Activated B cell treated with CpG ODN at 0.5 μM for 24 hours (primary cell): ENCODE measurements at regions of chr2 and their contacts with region 1.

Region 1: GRCh38 chr2:191150600-191151330 is at the start of gene STAT4:
- DNase-seq: peak; percentile 55
- ATAC-seq: peak; percentile 92
- H3K4me3 Mint-ChIP-seq: peak within 1 kb of the TSS; percentile 89
- H3K27ac Mint-ChIP-seq: peak within 1 kb of the TSS; percentile 79
- H3K4me1 Mint-ChIP-seq: peaks cover 30% of the 10 kb centered on the region
- H3K27me3 Mint-ChIP-seq: peaks cover 8% of the 10 kb centered on the region
- CTCF ChIP-seq: no peak
- total RNA-seq, gene STAT4: 15.1 and 16.5 TPM in 2 replicates

Region 2: GRCh38 chr2:189783927-189784867 is 1366.6 kb before region 1 on chr2 and contains the starts of genes ORMDL1 and PMS1:
- CTCF ChIA-PET with region 1: no interaction called
- POLR2A ChIA-PET with region 1: no interaction called
- intact Hi-C with region 1: loop called (anchors 2 kb)
- DNase-seq: peak; percentile 95
- ATAC-seq: peak; percentile 90
- H3K4me3 Mint-ChIP-seq: peak within 1 kb of the TSS; percentile 94
- H3K27ac Mint-ChIP-seq: peak within 1 kb of the TSS; percentile 96
- H3K4me1 Mint-ChIP-seq: peaks cover 45% of the 10 kb centered on the region
- H3K27me3 Mint-ChIP-seq: no peaks in the 10 kb centered on the region
- CTCF ChIP-seq: no peak
- total RNA-seq, gene ORMDL1: 80.5 and 92.6 TPM in 2 replicates
- total RNA-seq, gene PMS1: 32.7 and 39.0 TPM in 2 replicates

Region 3: GRCh38 chr2:190853531-190854383 is 297.0 kb before region 1 on chr2:
- CTCF ChIA-PET with region 1: interaction called, 5 read pairs
- POLR2A ChIA-PET with region 1: no interaction called
- intact Hi-C with region 1: loop called (anchors 2 kb)
- DNase-seq: no peak
- ATAC-seq: peak; percentile 60
- H3K4me3 Mint-ChIP-seq: no peak overlapping the region
- H3K27ac Mint-ChIP-seq: peak overlapping the region; percentile 9
- H3K4me1 Mint-ChIP-seq: peaks cover 19% of the 10 kb centered on the region
- H3K27me3 Mint-ChIP-seq: no peaks in the 10 kb centered on the region
- CTCF ChIP-seq: no peak

Region 4: DNA sequence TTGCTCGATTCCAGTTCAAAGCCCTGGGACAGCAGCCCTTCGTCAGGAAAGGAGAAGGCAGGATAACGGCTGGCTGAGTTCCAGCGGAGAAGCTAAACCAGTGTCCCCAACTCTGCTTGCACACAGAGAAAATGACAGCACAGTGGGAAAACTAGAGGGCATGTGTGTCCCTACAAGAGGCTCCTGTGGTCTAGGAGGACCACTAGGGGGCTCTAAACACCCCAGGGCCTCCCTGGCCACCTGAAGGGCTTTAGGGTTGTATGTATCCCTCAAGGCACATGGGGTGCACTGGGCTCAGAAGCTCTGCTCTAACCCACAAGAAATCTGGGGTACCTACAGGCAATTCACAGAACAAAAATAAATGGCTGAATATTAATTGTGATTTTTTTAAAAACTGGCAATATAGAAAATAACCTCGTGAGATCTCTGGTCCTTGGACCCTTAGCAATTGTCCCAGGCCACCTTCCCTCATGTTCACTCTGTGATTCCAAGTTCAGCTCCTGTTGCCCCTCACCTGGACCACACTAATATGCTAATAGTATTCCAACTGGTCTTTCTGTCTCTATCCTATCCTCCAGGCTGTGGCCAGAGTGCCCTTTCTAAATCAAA is 154.3 kb before region 1 on chr2:
- CTCF ChIA-PET with region 1: no interaction called
- POLR2A ChIA-PET with region 1: no interaction called
- intact Hi-C with region 1: loop called (anchors 1 kb)
- DNase-seq: no peak
- ATAC-seq: peak; percentile 82
- H3K4me3 Mint-ChIP-seq: no peak overlapping the region
- H3K27ac Mint-ChIP-seq: no peak overlapping the region
- H3K4me1 Mint-ChIP-seq: peaks cover 6% of the 10 kb centered on the region
- H3K27me3 Mint-ChIP-seq: no peaks in the 10 kb centered on the region
- CTCF ChIP-seq: peak; percentile 19

Region 5: DNA sequence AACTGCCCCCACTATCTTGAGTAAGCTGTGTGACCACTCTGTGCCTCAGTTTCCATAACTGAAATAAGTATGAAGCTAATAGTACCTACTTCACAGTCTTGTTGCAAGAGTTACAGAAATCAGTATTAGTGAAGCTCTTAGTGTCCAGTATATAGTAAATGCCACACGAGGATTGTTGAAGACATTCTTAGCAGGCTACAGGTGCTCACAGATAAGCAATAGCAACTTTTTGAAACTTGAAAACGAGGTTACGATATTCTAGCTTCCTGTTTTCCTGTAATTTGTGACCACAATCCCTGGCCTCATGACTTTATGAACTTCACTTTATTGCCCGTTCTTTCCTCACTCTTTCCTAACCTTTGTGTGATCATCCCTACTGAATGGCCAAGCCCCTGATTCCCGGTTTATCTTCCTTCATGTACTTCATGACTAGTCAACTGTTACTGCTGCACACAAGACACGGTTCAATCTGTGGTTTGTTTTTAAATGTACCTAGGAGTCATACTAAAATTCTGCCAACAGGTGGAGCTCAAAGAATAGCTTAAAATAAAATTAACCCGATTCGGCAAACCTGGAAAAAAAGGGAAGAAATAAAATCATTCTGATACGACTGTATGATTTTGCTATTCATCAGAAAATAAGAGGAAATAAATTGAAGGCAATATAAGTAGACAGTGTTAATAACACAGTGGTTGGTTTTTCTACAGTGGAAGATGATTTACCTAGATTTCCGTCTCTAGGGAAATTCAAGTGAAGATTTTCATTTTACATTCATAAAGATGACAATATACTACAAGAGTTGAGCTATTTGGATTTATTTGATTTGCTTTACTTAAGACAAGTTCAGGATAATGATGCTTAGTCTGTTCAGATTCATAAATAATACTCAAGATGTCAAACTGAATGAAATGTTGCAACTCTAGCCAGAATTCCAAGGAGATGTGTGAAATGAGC is 98.7 kb before region 1 on chr2:
- CTCF ChIA-PET with region 1: interaction called, 183 read pairs
- POLR2A ChIA-PET with region 1: interaction called, 5 read pairs
- intact Hi-C with region 1: loop called (anchors 1 kb)
- DNase-seq: no peak
- ATAC-seq: peak; percentile 62
- H3K4me3 Mint-ChIP-seq: no peak overlapping the region
- H3K27ac Mint-ChIP-seq: no peak overlapping the region
- H3K4me1 Mint-ChIP-seq: no peaks in the 10 kb centered on the region
- H3K27me3 Mint-ChIP-seq: peaks cover 9% of the 10 kb centered on the region
- CTCF ChIP-seq: peak; percentile 70

Region 6: GRCh38 chr2:191165176-191165643 is 14.4 kb after region 1 on chr2:
- CTCF ChIA-PET with region 1: interaction called, 18 read pairs
- POLR2A ChIA-PET with region 1: no interaction called
- intact Hi-C with region 1: no loop called
- DNase-seq: no peak
- ATAC-seq: no peak
- H3K4me3 Mint-ChIP-seq: no peak overlapping the region
- H3K27ac Mint-ChIP-seq: no peak overlapping the region
- H3K4me1 Mint-ChIP-seq: peaks cover 2% of the 10 kb centered on the region
- H3K27me3 Mint-ChIP-seq: peaks cover 10% of the 10 kb centered on the region
- CTCF ChIP-seq: no peak

Region 7: GRCh38 chr2:191352536-191352935 is 201.8 kb after region 1 on chr2:
- CTCF ChIA-PET with region 1: no interaction called
- POLR2A ChIA-PET with region 1: no interaction called
- intact Hi-C with region 1: no loop called
- DNase-seq: no peak
- ATAC-seq: no peak
- H3K4me3 Mint-ChIP-seq: no peak overlapping the region
- H3K27ac Mint-ChIP-seq: no peak overlapping the region
- H3K4me1 Mint-ChIP-seq: no peaks in the 10 kb centered on the region
- H3K27me3 Mint-ChIP-seq: no peaks in the 10 kb centered on the region
- CTCF ChIP-seq: no peak